Activated T-helper 1 cell treated with anti-CD3 and anti-CD28 coated beads, Interleukin-12 subunit alpha, Interleukin-12 subunit beta, Interleukin-2, Interleukin-4 antibody, amounts not matched to agents 30 ng/mL and 10 ng/mL and 1 ng/mL, durations not matched to agents 14 hours and 24 hours and 36 hours (primary cell): ENCODE measurements at regions of chr20 and their contacts with region 1.

Region 1: DNA sequence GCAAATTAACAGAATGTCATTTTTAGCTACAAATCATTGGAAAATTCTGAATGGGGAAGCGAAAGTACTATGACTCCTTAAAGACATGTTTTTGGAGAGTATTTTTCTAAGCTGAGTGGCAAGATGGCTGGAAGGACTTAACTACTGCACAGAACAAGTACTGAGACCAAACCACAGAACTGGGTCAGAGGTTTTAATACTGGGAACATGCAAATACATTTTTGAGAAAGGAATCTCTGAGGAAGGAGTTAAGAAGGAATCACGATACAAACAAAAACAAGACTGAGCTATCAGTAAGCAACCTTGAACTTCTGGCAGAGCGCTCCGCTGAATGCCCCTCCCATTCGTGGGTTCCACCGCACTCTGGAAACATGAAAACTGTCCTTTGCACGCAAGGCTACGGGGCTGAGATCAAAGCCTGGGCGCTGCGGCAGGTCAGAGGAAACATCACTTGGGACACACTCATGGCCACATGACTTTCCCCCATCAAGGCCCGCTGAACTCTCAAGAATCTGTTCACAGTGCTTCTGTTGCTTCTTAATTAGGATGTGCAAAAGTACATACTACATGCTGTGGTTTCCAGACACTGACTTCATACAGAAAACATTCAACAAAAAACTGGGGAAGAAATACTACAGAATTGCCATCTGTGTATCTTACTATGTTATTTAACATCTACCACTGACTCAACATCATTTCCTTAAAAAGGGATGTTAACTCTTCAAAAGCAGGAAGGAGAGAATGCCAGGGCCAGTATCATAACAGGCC is 27.8 kb downstream of the SLC23A2 start:
- DNase-seq: peak; percentile 68
- H3K4me3 Mint-ChIP-seq: peak overlapping the region; percentile 75
- H3K27ac Mint-ChIP-seq: peak overlapping the region; percentile 85
- H3K4me1 Mint-ChIP-seq: peaks cover 21% of the 10 kb centered on the region
- H3K27me3 Mint-ChIP-seq: no peaks in the 10 kb centered on the region

Region 2: DNA sequence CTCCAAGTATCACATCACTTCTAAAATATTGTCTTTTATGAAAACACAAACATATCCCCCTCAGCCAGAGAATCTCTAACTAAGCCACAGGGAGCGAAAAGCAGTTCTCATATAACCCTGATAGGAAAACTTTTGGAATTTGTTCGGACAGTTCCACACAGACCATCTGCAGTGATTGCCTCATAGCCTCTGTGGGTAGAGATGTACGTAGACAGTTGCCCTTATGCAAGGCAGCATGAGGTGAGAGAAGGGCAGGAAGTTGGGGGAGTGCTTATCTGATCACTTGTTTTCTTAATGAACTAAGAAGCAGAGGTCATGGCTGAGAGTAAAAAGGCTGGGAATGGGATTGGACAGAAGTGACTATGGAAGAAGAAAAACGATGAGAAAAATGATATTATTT is 11.8 kb before region 1 on chr20:
- intact Hi-C with region 1: loop called (anchors 1 kb)
- DNase-seq: peak; percentile 14
- H3K4me3 Mint-ChIP-seq: peak overlapping the region; percentile 67
- H3K27ac Mint-ChIP-seq: peak overlapping the region; percentile 94
- H3K4me1 Mint-ChIP-seq: peaks cover 29% of the 10 kb centered on the region
- H3K27me3 Mint-ChIP-seq: no peaks in the 10 kb centered on the region

Region 3: GRCh38 chr20:4989570-4989969 is 16.1 kb after region 1 on chr20:
- intact Hi-C with region 1: loop called (anchors 1 kb)
- DNase-seq: no peak
- H3K4me3 Mint-ChIP-seq: peak overlapping the region; percentile 60
- H3K27ac Mint-ChIP-seq: peak overlapping the region; percentile 88
- H3K4me1 Mint-ChIP-seq: peaks cover 19% of the 10 kb centered on the region
- H3K27me3 Mint-ChIP-seq: no peaks in the 10 kb centered on the region